Transverse colon (tissue), 4 donors: ENCODE measurements at regions of chr12 and their contacts with region 1.

Region 1: GRCh38 chr12:47032644-47033043 is 46.8 kb upstream of the PCED1B start:
- DNase-seq: no peak
- H3K4me3 ChIP-seq: no peak overlapping the region
- H3K27ac ChIP-seq: peak overlapping the region in 1 of 4 donors; percentile 1
- H3K4me1 ChIP-seq: peaks cover 0 to 20% (median 9%) of the 10 kb centered on the region in 4 donors
- H3K27me3 ChIP-seq: no peaks in the 10 kb centered on the region
- CTCF ChIP-seq: peak; percentile 41 to 62 (median 51)
- EP300 ChIP-seq: no peak
- POLR2A ChIP-seq: no peak

Region 2: GRCh38 chr12:47071241-47071852 is 38.7 kb after region 1 on chr12:
- in situ Hi-C with region 1: no loop called
- intact Hi-C with region 1: no loop called
- DNase-seq: no peak
- H3K4me3 ChIP-seq: no peak overlapping the region
- H3K27ac ChIP-seq: no peak overlapping the region
- H3K4me1 ChIP-seq: peaks cover 0 to 16% (median 4%) of the 10 kb centered on the region in 4 donors
- H3K27me3 ChIP-seq: no peaks in the 10 kb centered on the region
- CTCF ChIP-seq: peak in 4 of 5 experiments; percentile 24 to 48 (median 36)
- EP300 ChIP-seq: no peak
- POLR2A ChIP-seq: no peak

Region 3: GRCh38 chr12:47085815-47086252 is 53.2 kb after region 1 on chr12:
- in situ Hi-C with region 1: no loop called
- intact Hi-C with region 1: no loop called
- DNase-seq: peak; percentile 21
- H3K4me3 ChIP-seq: no peak overlapping the region
- H3K27ac ChIP-seq: peak overlapping the region; percentile 48 to 88 (median 80)
- H3K4me1 ChIP-seq: peaks cover 6 to 72% (median 22%) of the 10 kb centered on the region in 4 donors
- H3K27me3 ChIP-seq: peaks cover 2% of the 10 kb centered on the region
- CTCF ChIP-seq: no peak
- EP300 ChIP-seq: no peak
- POLR2A ChIP-seq: no peak

Region 4: GRCh38 chr12:47307680-47308399 is 275.2 kb after region 1 on chr12:
- in situ Hi-C with region 1: loop called in 3 of 4 experiments (anchors 10 to 25 kb)
- intact Hi-C with region 1: no loop called
- DNase-seq: peak; percentile 39
- H3K4me3 ChIP-seq: peak overlapping the region in 1 of 4 donors; percentile 16
- H3K27ac ChIP-seq: no peak overlapping the region
- H3K4me1 ChIP-seq: peaks cover 0 to 8% (median 0%) of the 10 kb centered on the region in 4 donors
- H3K27me3 ChIP-seq: no peaks in the 10 kb centered on the region
- CTCF ChIP-seq: peak; percentile 46 to 70 (median 57)
- EP300 ChIP-seq: no peak
- POLR2A ChIP-seq: no peak

Region 5: DNA sequence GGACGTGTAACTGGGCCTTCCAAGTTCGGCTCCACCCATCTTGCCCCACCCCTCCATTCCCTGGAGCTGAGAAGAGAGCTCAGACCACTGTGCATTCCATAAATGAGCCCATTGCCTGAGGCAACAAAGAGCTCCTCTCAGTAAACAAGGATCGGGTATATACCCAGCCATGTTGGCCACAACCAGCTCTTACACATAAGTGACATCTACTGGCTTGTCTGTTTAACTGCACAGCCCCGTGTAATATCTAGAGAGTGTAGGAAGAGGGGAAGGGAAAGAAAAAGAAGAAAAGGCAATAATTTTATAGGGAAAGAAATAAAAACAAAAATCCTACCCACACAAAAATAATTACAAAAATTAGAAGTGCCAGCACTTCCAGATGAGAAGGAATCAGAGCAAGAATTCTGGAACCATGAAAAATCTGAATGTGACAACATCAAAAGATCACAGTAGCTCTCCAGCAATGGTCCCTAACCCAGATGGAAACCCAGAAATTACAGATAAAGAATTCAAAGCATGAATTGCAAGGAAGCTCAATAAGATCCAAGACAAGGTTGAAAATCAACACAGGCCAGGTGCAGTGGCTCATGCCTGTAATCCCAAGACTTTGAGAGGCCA is 365.1 kb after region 1 on chr12:
- in situ Hi-C with region 1: loop called in 1 of 4 experiments (anchors 10 kb)
- intact Hi-C with region 1: no loop called
- DNase-seq: no peak
- H3K4me3 ChIP-seq: no peak overlapping the region
- H3K27ac ChIP-seq: no peak overlapping the region
- H3K4me1 ChIP-seq: peaks cover 0 to 5% (median 2%) of the 10 kb centered on the region in 4 donors
- H3K27me3 ChIP-seq: no peaks in the 10 kb centered on the region
- CTCF ChIP-seq: peak in 4 of 5 experiments; percentile 19 to 47 (median 29)
- EP300 ChIP-seq: no peak
- POLR2A ChIP-seq: no peak

Region 6: DNA sequence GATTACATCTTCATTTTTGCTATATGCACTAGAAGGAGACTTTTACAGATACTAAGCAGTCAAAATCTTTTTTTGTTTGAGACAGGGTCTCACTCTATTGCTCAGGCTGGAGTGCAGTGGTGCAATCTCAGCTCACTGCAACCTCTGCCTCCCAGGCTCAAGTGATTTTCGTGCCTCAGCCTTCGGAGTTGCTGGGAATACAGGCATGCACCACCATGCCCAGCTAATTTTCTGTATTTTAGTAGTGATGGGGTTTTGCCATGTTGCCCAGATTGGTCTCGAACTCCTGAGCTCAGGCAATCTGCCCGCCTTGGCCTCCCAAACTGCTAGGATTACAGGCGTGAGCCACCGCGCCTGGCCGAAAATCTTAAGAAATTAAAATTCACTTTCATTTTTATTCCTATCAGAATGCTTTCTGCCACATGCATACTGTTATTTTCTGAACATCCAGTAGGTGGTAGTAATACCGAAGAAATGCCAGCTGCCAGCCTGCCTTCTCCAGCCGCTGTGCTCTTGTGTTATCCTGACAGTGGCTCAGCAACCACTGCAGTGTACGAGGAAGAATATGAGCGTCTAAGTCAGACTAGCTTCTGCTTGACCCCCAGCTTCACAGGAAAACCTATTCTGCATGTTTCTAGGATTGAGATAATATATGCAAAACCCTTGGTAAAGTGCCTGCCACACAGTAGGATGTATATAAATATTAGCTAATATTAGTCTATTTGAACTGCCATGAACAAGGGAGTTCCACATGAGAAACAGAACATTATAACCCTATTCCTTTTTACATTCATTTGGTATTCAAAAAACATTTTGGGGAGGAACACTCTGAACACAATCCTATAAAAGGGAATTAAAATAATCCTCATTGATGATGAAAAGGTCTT is 619.0 kb after region 1 on chr12:
- in situ Hi-C with region 1: loop called in 2 of 4 experiments (anchors 25 kb)
- intact Hi-C with region 1: no loop called
- DNase-seq: peak; percentile 46
- H3K4me3 ChIP-seq: peak overlapping the region in 2 of 4 donors; percentile 23 to 28
- H3K27ac ChIP-seq: peak overlapping the region in 2 of 4 donors; percentile 10 to 23
- H3K4me1 ChIP-seq: peaks cover 0 to 15% (median 5%) of the 10 kb centered on the region in 4 donors
- H3K27me3 ChIP-seq: no peaks in the 10 kb centered on the region
- CTCF ChIP-seq: peak; percentile 69 to 79 (median 75)
- EP300 ChIP-seq: no peak
- POLR2A ChIP-seq: no peak

Region 7: DNA sequence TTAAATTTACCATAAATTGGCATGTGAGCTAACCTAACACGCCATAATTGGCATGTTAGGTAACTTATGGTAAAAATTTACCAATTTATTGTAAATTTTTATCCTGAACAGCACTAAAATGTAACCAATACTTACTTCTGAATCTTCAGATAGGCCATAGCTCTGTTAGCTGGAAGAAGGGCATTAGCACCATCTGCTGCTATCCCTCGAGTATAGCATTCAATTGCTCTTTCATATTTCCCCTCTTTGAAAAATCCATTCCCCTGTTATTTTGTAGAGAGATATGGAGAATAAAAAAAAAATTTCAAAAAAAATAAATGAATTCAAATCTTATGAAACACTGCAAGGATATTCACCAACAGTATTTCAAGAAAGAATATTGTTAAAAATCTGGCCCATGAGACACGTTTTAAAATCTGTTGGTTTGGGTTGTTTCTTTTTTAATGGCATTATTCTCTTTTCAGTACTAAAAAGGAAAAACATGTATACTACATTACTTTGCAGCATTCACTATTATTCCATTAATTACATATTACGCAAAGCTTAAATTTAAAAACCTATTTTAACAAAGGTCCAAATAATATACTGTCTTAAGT is 654.1 kb after region 1 on chr12:
- in situ Hi-C with region 1: loop called in 1 of 4 experiments (anchors 10 kb)
- intact Hi-C with region 1: loop called (anchors 10 kb)
- DNase-seq: no peak
- H3K4me3 ChIP-seq: no peak overlapping the region
- H3K27ac ChIP-seq: no peak overlapping the region
- H3K4me1 ChIP-seq: no peaks in the 10 kb centered on the region
- H3K27me3 ChIP-seq: no peaks in the 10 kb centered on the region
- CTCF ChIP-seq: peak; percentile 38 to 54 (median 50)
- EP300 ChIP-seq: no peak
- POLR2A ChIP-seq: no peak